Calu3 (cell line): ENCODE measurements at regions of chr12 and their contacts with region 1.

Region 1: GRCh38 chr12:91326058-91327027 is 143.7 kb upstream of the DCN start:
- DNase-seq: peak; percentile 70
- H3K4me3 Mint-ChIP-seq: no peak overlapping the region
- H3K27ac Mint-ChIP-seq: no peak overlapping the region
- H3K4me1 Mint-ChIP-seq: no peaks in the 10 kb centered on the region
- H3K27me3 Mint-ChIP-seq: no peaks in the 10 kb centered on the region
- CTCF ChIP-seq: peak; percentile 67

Region 2: DNA sequence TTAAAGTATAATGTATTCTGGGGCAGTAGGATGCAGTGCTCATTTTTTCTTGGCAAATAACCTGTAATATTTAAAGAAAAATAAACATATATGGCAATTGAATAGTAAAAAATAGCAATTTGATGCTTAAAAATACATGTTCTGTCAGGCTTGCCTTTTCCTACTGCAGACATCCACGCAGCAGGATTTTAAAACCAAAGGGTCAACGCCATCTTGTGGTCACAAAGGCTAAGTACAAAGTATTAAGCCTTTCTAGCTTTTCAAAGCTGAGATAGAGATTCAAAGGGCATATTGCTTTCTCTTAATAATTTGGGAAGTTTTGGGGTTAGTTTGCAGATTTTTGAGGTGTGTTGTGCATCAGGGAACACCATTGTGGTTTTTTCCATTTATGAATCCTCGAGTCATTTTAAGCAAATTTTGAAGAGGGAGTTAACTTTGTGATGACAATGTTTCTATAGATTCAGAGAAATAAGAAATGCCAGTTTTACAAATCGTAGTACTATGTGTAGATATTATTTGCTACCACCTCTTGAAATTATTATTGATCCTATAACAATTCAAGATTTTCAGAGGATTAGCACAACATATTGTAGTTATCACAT is 366.7 kb before region 1 on chr12:
- CTCF ChIA-PET with region 1: no interaction called
- intact Hi-C with region 1: loop called (anchors 1 kb)
- DNase-seq: peak; percentile 38
- H3K4me3 Mint-ChIP-seq: no peak overlapping the region
- H3K27ac Mint-ChIP-seq: no peak overlapping the region
- H3K4me1 Mint-ChIP-seq: no peaks in the 10 kb centered on the region
- H3K27me3 Mint-ChIP-seq: no peaks in the 10 kb centered on the region
- CTCF ChIP-seq: peak; percentile 65

Region 3: GRCh38 chr12:90978117-90978770 is 348.1 kb before region 1 on chr12:
- CTCF ChIA-PET with region 1: interaction called, 3 read pairs
- intact Hi-C with region 1: loop called (anchors 2 kb)
- DNase-seq: no peak
- H3K4me3 Mint-ChIP-seq: no peak overlapping the region
- H3K27ac Mint-ChIP-seq: no peak overlapping the region
- H3K4me1 Mint-ChIP-seq: peaks cover 25% of the 10 kb centered on the region
- H3K27me3 Mint-ChIP-seq: no peaks in the 10 kb centered on the region
- CTCF ChIP-seq: peak; percentile 60

Region 4: DNA sequence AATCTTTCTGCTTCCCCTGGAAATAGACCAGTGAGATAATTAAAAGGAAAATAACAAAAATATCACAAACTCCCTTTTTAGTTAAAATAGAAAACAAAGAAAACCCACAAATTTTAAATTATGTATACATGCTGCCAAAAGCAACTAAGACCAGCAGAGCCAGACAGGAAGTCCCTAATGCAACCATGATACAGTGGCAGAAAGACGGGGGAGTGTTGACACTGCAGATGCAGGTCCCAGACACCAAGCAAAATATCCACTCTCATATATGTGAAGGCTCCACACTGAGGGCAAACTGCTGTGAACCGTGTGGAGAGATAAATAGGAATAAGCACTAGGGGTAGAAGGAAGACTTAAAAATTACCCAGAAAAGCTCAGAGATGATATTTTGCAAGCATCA is 418.3 kb after region 1 on chr12:
- CTCF ChIA-PET with region 1: no interaction called
- intact Hi-C with region 1: no loop called
- DNase-seq: no peak
- H3K4me3 Mint-ChIP-seq: no peak overlapping the region
- H3K27ac Mint-ChIP-seq: no peak overlapping the region
- H3K4me1 Mint-ChIP-seq: no peaks in the 10 kb centered on the region
- H3K27me3 Mint-ChIP-seq: no peaks in the 10 kb centered on the region
- CTCF ChIP-seq: no peak